ENCODE measurements at regions of chr19 and their contacts with region 1.

Region 1: GRCh38 chr19:48795055-48795684 is 15.7 kb downstream of the BCAT2 start:
- DNase-seq: peak; percentile 79
- ATAC-seq: peak; percentile 98
- H3K4me3 Mint-ChIP-seq: peak overlapping the region; percentile 94
- H3K27ac Mint-ChIP-seq: peak overlapping the region; percentile 88
- H3K4me1 Mint-ChIP-seq: peaks cover 10% of the 10 kb centered on the region
- H3K27me3 Mint-ChIP-seq: no peaks in the 10 kb centered on the region
- CTCF ChIP-seq: peak; percentile 86

Region 2: GRCh38 chr19:48752498-48753365 is 42.4 kb before region 1 on chr19 and contains the start of gene FUT1:
- CTCF ChIA-PET with region 1: no interaction called
- POLR2A ChIA-PET with region 1: no interaction called
- intact Hi-C with region 1: no loop called
- DNase-seq: no peak
- ATAC-seq: peak; percentile 68
- H3K4me3 Mint-ChIP-seq: peak within 1 kb of the TSS; percentile 64
- H3K27ac Mint-ChIP-seq: no peak within 1 kb of the TSS
- H3K4me1 Mint-ChIP-seq: peaks cover 9% of the 10 kb centered on the region
- H3K27me3 Mint-ChIP-seq: peaks cover 34% of the 10 kb centered on the region
- CTCF ChIP-seq: no peak
- total RNA-seq, gene FUT1: not detected in 2 replicates

Region 3: DNA sequence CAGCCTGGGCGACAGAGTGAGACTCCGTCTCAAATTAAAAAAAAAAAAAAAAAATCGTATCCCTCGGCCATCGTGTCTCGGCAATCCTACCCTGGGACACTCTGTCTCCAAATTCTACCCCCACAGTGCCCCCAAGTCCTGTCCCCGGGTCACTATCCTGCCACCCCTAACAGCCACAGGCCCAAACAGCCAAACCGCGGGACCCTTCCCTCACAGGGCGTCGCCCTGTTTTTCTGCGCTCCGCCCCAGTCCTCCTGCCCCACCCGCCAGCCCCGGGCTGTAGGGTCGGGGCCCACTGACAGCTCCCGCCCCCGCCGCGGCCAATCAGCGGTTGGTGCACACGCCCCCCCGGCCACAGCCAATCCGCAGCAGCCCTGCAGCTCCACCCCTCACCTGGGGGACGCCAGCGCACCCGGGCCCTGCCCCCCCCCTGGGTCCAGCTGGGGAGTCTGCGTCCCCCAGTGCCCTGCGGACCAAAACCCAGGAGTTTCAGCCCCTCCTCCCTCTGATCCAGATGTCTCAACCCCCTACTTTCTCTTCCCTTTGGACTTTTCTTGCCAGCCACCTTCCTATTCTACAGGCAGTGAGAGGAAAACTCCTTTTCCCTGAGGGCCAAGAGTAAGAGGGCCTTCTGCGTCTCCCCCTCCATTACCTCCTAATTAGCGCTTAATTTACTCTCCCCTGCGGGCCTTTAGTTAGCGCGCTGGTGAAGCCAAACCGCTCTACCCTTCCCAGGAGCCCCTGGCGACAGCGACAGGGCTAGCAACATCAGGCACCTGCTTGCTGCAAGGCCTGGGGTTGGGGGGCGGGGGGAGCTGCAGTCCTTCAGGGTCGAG is 17.1 kb after region 1 on chr19:
- CTCF ChIA-PET with region 1: interaction called, 10 read pairs
- POLR2A ChIA-PET with region 1: interaction called, 23 read pairs
- intact Hi-C with region 1: loop called (anchors 1 kb)
- DNase-seq: peak; percentile 74
- ATAC-seq: peak; percentile 77
- H3K4me3 Mint-ChIP-seq: peak overlapping the region; percentile 88
- H3K27ac Mint-ChIP-seq: peak overlapping the region; percentile 91
- H3K4me1 Mint-ChIP-seq: peaks cover 29% of the 10 kb centered on the region
- H3K27me3 Mint-ChIP-seq: no peaks in the 10 kb centered on the region
- CTCF ChIP-seq: no peak

Measured in activated B cell treated with CpG ODN at 0.5 μM for 24 hours (primary cell).